Activated naive CD4-positive, alpha-beta T cell treated with anti-CD3 and anti-CD28 coated beads for 36 hours (primary cell): ENCODE measurements at regions of chr9 and their contacts with region 1.

Region 1: GRCh38 chr9:131349881-131350563 is 43.9 kb upstream of the PRRC2B start:
- DNase-seq: peak; percentile 95
- H3K4me3 Mint-ChIP-seq: peak overlapping the region; percentile 11
- H3K27ac Mint-ChIP-seq: peak overlapping the region; percentile 11
- H3K4me1 Mint-ChIP-seq: peaks cover 7% of the 10 kb centered on the region
- H3K27me3 Mint-ChIP-seq: no peaks in the 10 kb centered on the region

Region 2: GRCh38 chr9:130918870-130919558 is 431.0 kb before region 1 on chr9:
- CTCF ChIA-PET with region 1: no interaction called
- intact Hi-C with region 1: no loop called
- DNase-seq: no peak
- H3K4me3 Mint-ChIP-seq: no peak overlapping the region
- H3K27ac Mint-ChIP-seq: no peak overlapping the region
- H3K4me1 Mint-ChIP-seq: no peaks in the 10 kb centered on the region
- H3K27me3 Mint-ChIP-seq: peaks cover 6% of the 10 kb centered on the region

Region 3: DNA sequence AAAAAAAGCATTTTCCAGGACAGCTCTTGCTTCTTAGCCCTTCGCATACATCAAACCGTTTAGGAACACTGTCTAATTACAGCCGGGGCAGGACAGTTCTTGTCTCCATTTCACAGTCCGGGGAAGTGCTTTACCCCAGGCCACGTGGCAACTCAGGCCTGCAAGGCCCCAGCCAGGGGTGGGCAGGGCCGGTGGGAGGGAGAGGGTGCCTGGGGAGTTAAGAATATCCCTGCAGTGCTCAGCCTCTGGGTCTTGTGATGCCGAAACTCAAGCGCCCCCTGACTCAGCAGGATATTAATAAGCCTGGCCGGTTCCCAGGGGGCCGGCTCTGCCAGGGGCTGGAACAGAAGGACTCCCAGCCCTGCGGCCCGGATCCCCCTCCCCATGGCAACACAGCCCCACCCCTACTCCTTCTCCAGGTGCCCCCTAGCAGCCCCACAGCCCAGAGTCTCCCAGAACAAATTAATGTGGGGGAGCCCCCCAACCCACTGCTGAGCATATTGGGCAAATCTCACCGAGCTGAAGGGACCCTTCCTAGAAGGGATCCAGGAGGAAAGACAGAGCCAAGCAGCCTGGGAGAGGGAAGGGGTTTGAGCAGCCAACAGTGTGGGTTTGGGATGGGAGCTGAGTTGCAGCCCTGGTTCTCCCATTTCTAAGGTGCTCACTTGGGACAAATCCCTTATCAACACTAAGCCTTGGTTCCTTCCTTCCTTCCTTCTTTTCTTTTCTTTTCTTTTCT is 15.2 kb before region 1 on chr9:
- CTCF ChIA-PET with region 1: interaction called, 14 read pairs
- intact Hi-C with region 1: no loop called
- DNase-seq: no peak
- H3K4me3 Mint-ChIP-seq: no peak overlapping the region
- H3K27ac Mint-ChIP-seq: no peak overlapping the region
- H3K4me1 Mint-ChIP-seq: peaks cover 3% of the 10 kb centered on the region
- H3K27me3 Mint-ChIP-seq: no peaks in the 10 kb centered on the region

Region 4: GRCh38 chr9:131407717-131408195 is 57.7 kb after region 1 on chr9:
- CTCF ChIA-PET with region 1: interaction called, 12 read pairs
- intact Hi-C with region 1: loop called (anchors 2 kb)
- DNase-seq: peak; percentile 65
- H3K4me3 Mint-ChIP-seq: peak overlapping the region; percentile 56
- H3K27ac Mint-ChIP-seq: peak overlapping the region; percentile 75
- H3K4me1 Mint-ChIP-seq: peaks cover 87% of the 10 kb centered on the region
- H3K27me3 Mint-ChIP-seq: no peaks in the 10 kb centered on the region

Region 5: DNA sequence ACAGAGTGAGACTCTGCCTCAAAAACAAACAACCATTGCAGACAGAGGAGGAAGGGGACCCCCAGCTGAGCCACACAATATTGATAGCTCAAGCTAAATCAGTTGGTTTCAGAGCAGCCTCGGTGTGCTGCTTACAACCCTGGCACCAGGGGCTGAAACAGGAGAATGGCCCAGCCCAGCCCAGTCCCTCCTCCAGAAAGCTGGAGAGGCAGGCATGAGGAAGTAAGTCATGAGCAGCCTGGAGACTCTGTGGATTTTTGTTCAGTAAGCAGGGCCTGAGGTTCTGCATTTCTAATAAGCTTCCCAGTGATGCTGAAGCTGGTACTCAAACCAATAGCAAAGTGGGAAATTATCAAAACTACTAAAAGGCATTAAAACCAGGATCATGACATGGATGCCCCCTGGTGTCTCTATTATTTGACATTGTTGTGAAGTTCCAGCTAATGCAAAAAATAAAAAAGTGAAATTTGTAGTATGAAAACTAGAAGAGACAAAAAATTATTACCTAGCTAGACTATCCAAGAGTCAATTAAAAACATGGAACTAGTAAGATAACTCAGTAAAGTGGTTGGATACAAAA is 209.5 kb after region 1 on chr9:
- CTCF ChIA-PET with region 1: interaction called, 7 read pairs
- intact Hi-C with region 1: loop called (anchors 1 kb)
- DNase-seq: no peak
- H3K4me3 Mint-ChIP-seq: no peak overlapping the region
- H3K27ac Mint-ChIP-seq: no peak overlapping the region
- H3K4me1 Mint-ChIP-seq: peaks cover 3% of the 10 kb centered on the region
- H3K27me3 Mint-ChIP-seq: peaks cover 14% of the 10 kb centered on the region

Region 6: GRCh38 chr9:131747356-131747755 is 397.3 kb after region 1 on chr9:
- CTCF ChIA-PET with region 1: interaction called, 3 read pairs
- intact Hi-C with region 1: loop called (anchors 1 kb)
- DNase-seq: peak; percentile 28
- H3K4me3 Mint-ChIP-seq: no peak overlapping the region
- H3K27ac Mint-ChIP-seq: no peak overlapping the region
- H3K4me1 Mint-ChIP-seq: peaks cover 24% of the 10 kb centered on the region
- H3K27me3 Mint-ChIP-seq: no peaks in the 10 kb centered on the region